GM10248 (cell line): ENCODE measurements at regions of chr3 and their contacts with region 1.

Region 1: GRCh38 chr3:196585044-196585757 is 16.7 kb downstream of the FBXO45 start:
- DNase-seq: no peak
- CTCF ChIP-seq: no peak

Region 2: DNA sequence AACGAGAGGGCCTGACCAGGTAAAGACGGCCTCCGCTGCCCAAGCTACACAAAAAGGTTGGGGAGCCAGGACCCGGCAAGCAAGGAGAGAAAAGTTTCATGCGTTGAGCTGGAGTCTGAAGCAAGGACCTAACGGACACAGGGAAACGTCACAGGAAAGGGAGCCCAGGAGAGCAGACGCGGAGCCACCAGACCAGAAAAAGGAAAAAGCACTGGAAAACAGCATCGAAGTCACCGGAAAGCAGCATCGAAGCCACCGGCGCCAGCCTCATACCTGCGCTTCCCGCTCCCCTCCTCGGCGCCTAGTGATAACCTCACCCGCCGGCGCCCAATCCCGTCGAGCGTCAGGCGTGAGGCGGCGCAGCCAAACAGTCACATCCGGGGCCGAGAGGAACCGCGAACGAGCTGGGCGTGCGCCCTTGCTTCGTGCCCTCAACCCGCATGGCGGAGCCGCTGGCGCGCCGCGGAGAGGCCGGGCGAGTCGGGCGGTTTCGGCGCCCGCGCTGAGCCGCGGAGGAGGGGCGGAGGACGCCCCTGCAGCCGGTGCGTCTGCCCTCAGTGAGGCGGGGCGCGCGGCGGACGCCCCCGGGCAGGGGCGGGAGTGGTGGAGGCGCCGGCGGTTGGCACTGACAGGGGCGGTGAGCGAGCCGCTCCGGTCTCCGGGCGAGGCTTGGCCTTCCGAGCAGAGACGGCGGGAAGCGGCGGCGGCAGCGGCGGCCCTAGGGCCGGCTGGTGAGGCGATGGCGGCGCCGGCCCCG is 16.8 kb before region 1 on chr3 and contains the starts of genes FBXO45 and WDR53:
- CTCF ChIA-PET with region 1: interaction called, 13 read pairs
- POLR2A ChIA-PET with region 1: no interaction called
- DNase-seq: peak; percentile 98
- CTCF ChIP-seq: no peak